Activated CD4-positive, alpha-beta T cell treated with anti-CD3 and anti-CD28 coated beads, Interleukin-2, amount 10 ng/mL, durations not matched to agents 24 days and 14 days (primary cell): ENCODE measurements at regions of chr10 and their contacts with region 1.

Region 1: DNA sequence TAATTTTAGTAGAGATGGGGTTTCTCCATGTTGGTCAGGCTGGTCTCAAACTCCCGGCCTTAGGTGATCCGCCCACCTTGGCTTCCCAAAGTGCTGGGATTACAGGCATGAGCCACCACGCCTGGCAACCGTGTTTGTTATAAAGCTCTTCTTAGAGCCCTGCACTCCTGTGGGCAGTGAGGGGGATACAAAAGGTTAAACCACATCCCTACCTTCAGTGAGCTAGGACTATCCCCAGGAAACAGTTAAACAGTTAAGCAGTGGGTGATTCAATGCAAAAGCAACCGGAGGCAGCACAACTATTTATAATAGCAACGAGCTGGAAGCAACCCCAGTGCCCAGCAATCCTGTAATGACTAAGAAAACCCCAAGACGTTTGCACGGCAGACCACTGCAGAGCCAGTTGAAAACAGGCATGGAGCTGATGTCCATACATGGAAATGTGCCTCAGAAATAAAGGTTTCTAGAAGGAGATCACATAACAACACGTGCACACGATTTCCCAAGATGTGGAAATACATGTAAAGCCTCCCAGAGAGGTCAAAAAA is 107.2 kb upstream of the LYZL2 start:
- DNase-seq: peak; percentile 77
- H3K4me3 Mint-ChIP-seq: peak overlapping the region; percentile 12
- H3K27ac Mint-ChIP-seq: peak overlapping the region; percentile 86
- H3K4me1 Mint-ChIP-seq: peaks cover 22% of the 10 kb centered on the region
- H3K27me3 Mint-ChIP-seq: no peaks in the 10 kb centered on the region

Region 2: DNA sequence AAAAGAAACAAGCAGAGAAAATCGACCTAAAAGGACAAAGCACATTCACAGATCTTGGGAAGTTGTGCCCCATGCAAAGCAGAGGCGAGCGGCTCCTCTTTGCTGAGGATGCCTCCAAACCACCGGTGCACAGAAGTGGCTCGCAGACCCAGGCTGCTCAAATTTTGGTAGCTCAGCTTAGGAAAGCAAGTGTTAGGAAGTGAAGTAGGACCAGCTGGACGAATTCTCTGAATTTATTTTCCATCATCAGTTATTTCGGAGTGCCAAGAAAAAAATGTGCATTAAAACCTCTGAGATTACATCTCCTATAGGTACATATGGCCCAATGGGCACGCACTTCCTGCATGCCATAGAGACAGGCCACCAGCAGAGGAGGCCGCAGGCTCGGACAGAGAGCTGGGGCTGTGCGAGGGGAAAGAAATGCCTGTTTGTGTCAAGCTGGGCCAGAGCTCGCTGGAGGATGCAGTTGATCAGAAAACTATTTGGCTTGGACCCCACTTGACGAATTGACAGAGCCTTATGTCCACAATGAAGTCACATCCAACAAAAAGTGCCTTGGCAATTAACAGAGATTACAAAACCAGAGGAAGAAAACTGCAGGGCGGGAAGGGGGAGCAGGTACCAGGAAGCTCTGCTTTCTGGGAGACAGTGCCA is 15.0 kb after region 1 on chr10:
- intact Hi-C with region 1: loop called (anchors 2 kb)
- DNase-seq: no peak
- H3K4me3 Mint-ChIP-seq: peak overlapping the region; percentile 53
- H3K27ac Mint-ChIP-seq: peak overlapping the region; percentile 59
- H3K4me1 Mint-ChIP-seq: peaks cover 45% of the 10 kb centered on the region
- H3K27me3 Mint-ChIP-seq: no peaks in the 10 kb centered on the region

Region 3: GRCh38 chr10:32692174-32692573 is 1955.4 kb after region 1 on chr10:
- intact Hi-C with region 1: no loop called
- DNase-seq: no peak
- H3K4me3 Mint-ChIP-seq: no peak overlapping the region
- H3K27ac Mint-ChIP-seq: no peak overlapping the region
- H3K4me1 Mint-ChIP-seq: no peaks in the 10 kb centered on the region
- H3K27me3 Mint-ChIP-seq: no peaks in the 10 kb centered on the region